HCT116 (cell line): ENCODE measurements at regions of chr2 and their contacts with region 1.

Region 1: GRCh38 chr2:25644396-25644795 is 29.0 kb downstream of the DTNB start:
- DNase-seq: no peak
- ATAC-seq: no peak
- H3K4me3 ChIP-seq: no peak overlapping the region
- H3K27ac ChIP-seq: no peak overlapping the region
- H3K4me1 ChIP-seq: no peaks in the 10 kb centered on the region
- H3K27me3 ChIP-seq: no peaks in the 10 kb centered on the region
- CTCF ChIP-seq: no peak
- POLR2A ChIP-seq: no peak
- RAD21 ChIP-seq: no peak

Region 2: DNA sequence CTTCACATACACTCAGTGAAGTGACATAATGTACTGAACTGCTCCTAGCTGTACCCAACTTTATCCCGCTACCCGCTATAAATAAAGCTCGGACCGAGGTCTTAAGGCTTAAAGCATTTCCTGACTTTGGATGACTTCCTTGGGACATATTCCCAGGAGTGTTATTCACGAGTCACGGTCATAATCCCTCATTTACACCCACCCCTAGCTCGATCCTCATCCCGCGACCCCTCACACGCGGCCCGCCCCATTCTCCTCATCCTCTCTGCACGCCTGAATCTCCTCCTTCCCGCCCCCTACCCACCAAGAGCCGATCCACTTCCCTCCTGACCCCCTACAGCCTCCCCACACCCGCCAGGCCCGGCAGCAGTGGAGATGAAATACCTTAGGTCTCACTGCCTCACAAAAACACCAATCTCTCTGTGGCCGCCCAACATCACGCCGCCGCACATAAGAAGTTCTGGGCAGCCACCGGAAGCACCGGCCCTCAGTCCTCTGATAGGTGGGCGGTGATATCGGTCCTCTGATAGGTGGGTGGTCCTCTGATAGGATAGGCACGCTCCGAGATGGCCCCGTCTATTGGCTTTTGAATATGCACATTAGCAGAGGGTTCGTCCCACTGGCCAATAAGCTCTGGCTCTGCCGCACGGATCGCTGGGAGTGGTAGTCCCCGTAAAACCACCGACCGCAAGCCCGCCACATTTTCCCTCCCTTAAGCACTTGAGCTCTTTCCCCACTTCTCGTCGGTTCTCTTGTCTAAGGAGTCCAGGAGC is 1597.3 kb before region 1 on chr2 and contains the start of gene WDCP:
- CTCF ChIA-PET with region 1: no interaction called
- POLR2A ChIA-PET with region 1: no interaction called
- RAD21 ChIA-PET with region 1: no interaction called
- intact Hi-C with region 1: no loop called
- DNase-seq: peak; percentile 95
- ATAC-seq: peak; percentile 93
- H3K4me3 ChIP-seq: peak within 1 kb of the TSS; percentile 86 to 93
- H3K27ac ChIP-seq: peak within 1 kb of the TSS; percentile 35
- H3K4me1 ChIP-seq: peaks cover 13 to 30% of the 10 kb centered on the region in 2 experiments
- H3K27me3 ChIP-seq: no peaks in the 10 kb centered on the region
- CTCF ChIP-seq: no peak
- POLR2A ChIP-seq: peak; percentile 86
- RAD21 ChIP-seq: no peak
- total RNA-seq, gene WDCP: 19.9 TPM

Region 3: DNA sequence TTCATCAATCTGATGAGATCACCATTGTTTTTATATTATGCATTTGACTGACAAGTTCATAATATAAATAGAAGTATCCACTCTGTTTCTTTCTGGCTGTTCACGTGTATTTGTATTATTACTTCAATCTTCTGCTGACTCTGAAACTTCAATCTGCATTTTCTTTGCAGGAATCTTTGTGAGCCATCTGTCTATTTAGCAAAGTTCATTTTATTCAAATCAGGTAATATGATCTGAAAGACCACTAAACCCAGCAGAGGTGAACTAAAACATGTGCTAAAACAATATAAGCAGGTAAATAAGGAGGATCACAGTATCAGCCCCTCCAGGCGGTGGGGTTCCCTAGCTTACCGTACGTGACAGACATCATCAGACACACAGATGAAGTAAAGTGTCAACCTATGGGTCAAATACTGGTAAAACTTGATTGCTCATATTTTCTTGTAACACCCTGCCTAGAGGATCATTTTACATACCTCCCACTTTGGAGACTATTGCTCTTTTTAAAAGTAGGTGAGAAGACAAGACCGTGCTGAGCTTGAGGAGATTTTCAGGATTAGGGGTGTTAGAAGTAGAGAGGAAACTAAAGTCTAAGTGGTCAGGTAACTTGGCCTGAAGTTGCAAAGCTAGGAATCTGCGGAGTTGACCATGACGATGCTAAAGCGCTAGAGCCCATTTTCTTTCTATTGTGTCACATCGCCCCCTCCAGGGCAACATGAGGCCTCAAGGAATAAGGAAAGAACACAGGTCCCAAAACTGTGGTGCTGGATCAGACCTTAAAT is 20.0 kb after region 1 on chr2:
- CTCF ChIA-PET with region 1: interaction called, 10 read pairs
- POLR2A ChIA-PET with region 1: no interaction called
- RAD21 ChIA-PET with region 1: no interaction called
- intact Hi-C with region 1: no loop called
- DNase-seq: peak; percentile 68
- ATAC-seq: peak; percentile 97
- H3K4me3 ChIP-seq: peak overlapping the region; percentile 0 to 33; a peak in 3 of 4 replicates
- H3K27ac ChIP-seq: peak overlapping the region; percentile 3; the same call in 1 of the 2 replicates
- H3K4me1 ChIP-seq: peaks cover 10 to 16% of the 10 kb centered on the region in 2 experiments
- H3K27me3 ChIP-seq: no peaks in the 10 kb centered on the region
- CTCF ChIP-seq: peak; percentile 81 to 90 (median 85)
- POLR2A ChIP-seq: no peak
- RAD21 ChIP-seq: peak; percentile 89